SK-N-SH (cell line): ENCODE measurements at regions of chr1 and their contacts with region 1.

Region 1: DNA sequence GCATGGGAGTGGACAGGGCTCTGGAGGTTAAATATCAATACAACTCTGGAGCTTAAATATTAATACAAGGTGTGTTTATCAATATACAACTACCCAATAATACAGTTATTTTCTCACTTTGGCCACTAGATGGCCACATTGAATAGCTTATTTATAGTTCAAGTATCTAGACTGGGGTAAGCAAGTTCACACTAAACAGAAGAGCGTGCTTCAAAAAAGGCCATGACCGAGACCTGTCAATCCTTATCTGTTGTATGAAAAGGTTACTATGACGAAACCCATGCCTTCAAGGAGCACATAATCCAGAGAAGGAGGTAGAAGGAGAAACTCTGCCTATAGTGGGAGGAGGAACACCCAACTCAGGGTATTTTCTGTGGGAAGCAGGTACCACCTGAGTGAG is 29.1 kb downstream of the CHML start:
- DNase-seq: peak; percentile 29
- H3K4me3 ChIP-seq: no peak overlapping the region
- H3K27ac ChIP-seq: no peak overlapping the region; a peak in 1 of 4 replicates
- H3K4me1 ChIP-seq: peaks cover 6 to 18% of the 10 kb centered on the region in 2 experiments; a peak in 3 of 4 replicates
- H3K27me3 ChIP-seq: no peaks in the 10 kb centered on the region
- CTCF ChIP-seq: peak; percentile 76
- EP300 ChIP-seq: no peak
- RAD21 ChIP-seq: peak; percentile 83

Region 2: DNA sequence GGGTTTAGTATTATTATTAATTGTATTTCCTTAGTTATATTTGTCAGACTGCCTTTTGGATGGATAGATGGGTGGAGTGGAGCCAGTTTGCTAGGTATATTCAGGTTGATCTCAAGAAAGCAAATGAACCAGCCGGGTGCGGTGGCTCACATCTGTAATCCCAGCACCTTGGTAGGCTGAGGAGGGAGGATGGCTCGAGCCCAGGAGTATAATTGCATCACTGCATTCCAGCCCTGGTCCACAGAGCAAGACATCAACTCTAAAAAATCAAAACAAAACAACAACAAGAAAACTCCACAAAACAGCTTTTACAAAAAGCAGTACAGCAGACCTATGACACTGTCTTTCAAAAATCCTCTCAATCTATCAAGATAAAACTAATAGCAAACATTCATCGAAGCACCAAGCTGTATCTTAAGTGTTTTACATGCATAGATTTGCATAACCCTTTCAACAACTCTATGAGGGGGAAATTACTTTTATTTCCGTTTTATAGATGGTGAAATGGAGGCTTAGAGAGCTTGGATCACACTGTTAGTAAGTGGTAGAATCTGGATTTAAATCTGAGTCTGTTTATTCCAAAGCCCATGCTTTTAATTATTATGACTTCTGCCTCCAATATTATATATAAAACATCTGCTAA is 53.4 kb before region 1 on chr1:
- CTCF ChIA-PET with region 1: no interaction called
- POLR2A ChIA-PET with region 1: no interaction called
- DNase-seq: no peak
- H3K4me3 ChIP-seq: no peak overlapping the region
- H3K27ac ChIP-seq: no peak overlapping the region
- H3K4me1 ChIP-seq: no peaks in the 10 kb centered on the region
- H3K27me3 ChIP-seq: no peaks in the 10 kb centered on the region
- CTCF ChIP-seq: no peak
- EP300 ChIP-seq: no peak
- RAD21 ChIP-seq: no peak

Region 3: DNA sequence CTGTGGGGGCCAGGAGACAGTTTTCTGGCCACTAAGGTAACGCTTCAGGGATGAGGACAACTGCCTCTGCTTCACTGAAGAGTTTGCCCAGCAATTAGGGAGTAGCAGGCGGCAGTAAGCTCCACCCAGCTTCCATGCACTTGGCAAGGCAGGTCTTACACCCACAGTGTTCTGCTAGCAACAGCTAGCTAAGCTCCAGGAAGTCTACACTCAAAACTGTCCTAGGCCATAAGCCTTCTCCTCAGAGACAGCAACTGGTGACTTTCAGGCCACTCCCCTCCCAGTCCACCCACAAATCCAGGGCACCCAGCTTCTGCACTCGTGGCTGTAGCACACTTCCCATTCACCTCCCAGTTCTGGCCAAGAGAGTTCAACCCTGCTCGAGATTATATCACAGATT is 31.6 kb before region 1 on chr1:
- CTCF ChIA-PET with region 1: no interaction called
- POLR2A ChIA-PET with region 1: no interaction called
- DNase-seq: no peak
- H3K4me3 ChIP-seq: no peak overlapping the region
- H3K27ac ChIP-seq: no peak overlapping the region
- H3K4me1 ChIP-seq: no peaks in the 10 kb centered on the region
- H3K27me3 ChIP-seq: no peaks in the 10 kb centered on the region
- CTCF ChIP-seq: no peak
- EP300 ChIP-seq: no peak
- RAD21 ChIP-seq: no peak

Region 4: GRCh38 chr1:241591326-241591725 is 19.7 kb before region 1 on chr1:
- CTCF ChIA-PET with region 1: interaction called, 13 read pairs
- POLR2A ChIA-PET with region 1: no interaction called
- DNase-seq: no peak
- H3K4me3 ChIP-seq: no peak overlapping the region
- H3K27ac ChIP-seq: no peak overlapping the region
- H3K4me1 ChIP-seq: peaks cover 0 to 13% of the 10 kb centered on the region in 2 experiments; a peak in 1 of 4 replicates
- H3K27me3 ChIP-seq: no peaks in the 10 kb centered on the region
- CTCF ChIP-seq: no peak
- EP300 ChIP-seq: no peak
- RAD21 ChIP-seq: no peak

Region 5: GRCh38 chr1:241600496-241600901 is 10.6 kb before region 1 on chr1:
- CTCF ChIA-PET with region 1: interaction called, 14 read pairs
- POLR2A ChIA-PET with region 1: no interaction called
- DNase-seq: no peak
- H3K4me3 ChIP-seq: no peak overlapping the region
- H3K27ac ChIP-seq: peak overlapping the region in 1 of 2 experiments; percentile 39; a peak in 1 of 4 replicates
- H3K4me1 ChIP-seq: no peaks in the 10 kb centered on the region; a peak in 1 of 4 replicates
- H3K27me3 ChIP-seq: no peaks in the 10 kb centered on the region
- CTCF ChIP-seq: no peak
- EP300 ChIP-seq: no peak; a peak in 1 of 4 replicates
- RAD21 ChIP-seq: no peak

Region 6: GRCh38 chr1:241627453-241628259 is 16.6 kb after region 1 on chr1:
- CTCF ChIA-PET with region 1: interaction called, 41 read pairs
- POLR2A ChIA-PET with region 1: no interaction called
- DNase-seq: no peak
- H3K4me3 ChIP-seq: no peak overlapping the region
- H3K27ac ChIP-seq: no peak overlapping the region
- H3K4me1 ChIP-seq: no peaks in the 10 kb centered on the region; a peak in 1 of 4 replicates
- H3K27me3 ChIP-seq: no peaks in the 10 kb centered on the region
- CTCF ChIP-seq: peak; percentile 82
- EP300 ChIP-seq: no peak
- RAD21 ChIP-seq: peak; percentile 62

Region 7: DNA sequence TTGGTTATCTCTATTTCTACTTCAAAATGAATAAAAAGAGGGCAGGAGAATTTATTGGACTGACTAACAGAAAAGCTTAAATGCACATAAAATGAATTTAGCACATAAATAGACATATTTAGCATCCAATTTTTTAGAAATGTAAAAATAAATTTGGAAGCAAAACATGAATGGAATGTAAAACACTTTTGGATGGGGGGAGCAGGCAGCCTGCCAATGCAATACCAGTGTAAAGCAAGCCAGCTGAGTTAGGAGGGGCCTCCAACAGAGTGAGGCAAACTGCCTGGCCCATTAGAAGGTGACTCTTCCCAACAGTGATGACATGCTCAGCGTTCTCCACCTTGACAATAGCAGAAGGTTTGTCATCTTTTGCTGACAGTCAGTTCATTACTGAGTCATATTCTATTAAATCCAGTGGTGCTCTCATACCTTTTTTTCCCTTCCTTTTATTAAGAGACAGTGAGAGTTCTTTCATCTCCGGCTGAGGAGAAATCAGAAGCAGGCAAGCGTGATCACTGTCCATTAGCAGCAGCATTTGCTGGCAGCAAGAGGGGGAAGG is 217.5 kb after region 1 on chr1:
- CTCF ChIA-PET with region 1: interaction called, 32 read pairs
- POLR2A ChIA-PET with region 1: no interaction called
- DNase-seq: peak; percentile 14
- H3K4me3 ChIP-seq: no peak overlapping the region
- H3K27ac ChIP-seq: no peak overlapping the region
- H3K4me1 ChIP-seq: peaks cover 0 to 10% of the 10 kb centered on the region in 2 experiments; a peak in 2 of 4 replicates
- H3K27me3 ChIP-seq: no peaks in the 10 kb centered on the region
- CTCF ChIP-seq: no peak
- EP300 ChIP-seq: no peak
- RAD21 ChIP-seq: no peak

Region 8: GRCh38 chr1:241834733-241835377 is 223.8 kb after region 1 on chr1:
- CTCF ChIA-PET with region 1: interaction called, 32 read pairs
- POLR2A ChIA-PET with region 1: no interaction called
- DNase-seq: peak; percentile 26
- H3K4me3 ChIP-seq: no peak overlapping the region; a peak in 1 of 4 replicates
- H3K27ac ChIP-seq: no peak overlapping the region
- H3K4me1 ChIP-seq: no peaks in the 10 kb centered on the region; a peak in 1 of 4 replicates
- H3K27me3 ChIP-seq: no peaks in the 10 kb centered on the region
- CTCF ChIP-seq: peak; percentile 75
- EP300 ChIP-seq: no peak
- RAD21 ChIP-seq: peak; percentile 82

Region 9: GRCh38 chr1:241847796-241848685 is 237.0 kb after region 1 on chr1 and contains the start of gene EXO1:
- CTCF ChIA-PET with region 1: interaction called, 36 read pairs
- POLR2A ChIA-PET with region 1: interaction called, 4 read pairs
- DNase-seq: peak; percentile 92
- H3K4me3 ChIP-seq: peak within 1 kb of the TSS; percentile 96 to 99
- H3K27ac ChIP-seq: peak within 1 kb of the TSS; percentile 98 to 100
- H3K4me1 ChIP-seq: peaks cover 0 to 17% of the 10 kb centered on the region in 2 experiments; a peak in 2 of 4 replicates
- H3K27me3 ChIP-seq: no peaks in the 10 kb centered on the region
- CTCF ChIP-seq: peak; percentile 51
- EP300 ChIP-seq: no peak
- RAD21 ChIP-seq: peak; percentile 61
- polyA plus RNA-seq, gene EXO1: 3.9 and 4.6 TPM in 2 replicates